Activated naive CD4-positive, alpha-beta T cell treated with anti-CD3 and anti-CD28 coated beads for 36 hours (primary cell): ENCODE measurements at regions of chr2 and their contacts with region 1.

Region 1: DNA sequence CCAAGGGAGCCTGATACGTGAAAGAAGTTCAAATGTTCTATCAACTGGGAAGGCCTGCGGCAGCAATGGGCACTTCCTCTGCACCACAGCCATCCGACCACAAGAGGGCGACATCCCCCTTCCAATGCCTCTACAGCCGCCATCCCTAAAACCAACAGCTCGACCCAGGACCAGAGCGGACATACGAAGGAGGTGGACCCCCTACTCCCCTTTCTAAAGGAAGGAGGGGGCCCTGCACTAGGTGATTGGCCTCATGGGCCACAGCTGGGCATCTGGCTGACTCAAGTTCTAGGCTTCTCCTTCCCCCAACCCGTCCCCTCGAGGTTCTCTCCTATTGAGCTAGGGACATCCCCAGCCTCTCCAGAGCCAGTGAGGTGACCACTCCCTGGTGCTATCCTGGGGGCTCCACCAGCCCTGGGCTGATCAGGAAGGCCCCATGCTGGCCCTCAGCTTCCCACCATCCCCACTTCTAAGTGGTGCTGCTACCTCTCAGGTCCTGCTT is 217.2 kb downstream of the TNS1 start:
- DNase-seq: peak; percentile 88
- H3K4me3 Mint-ChIP-seq: no peak overlapping the region
- H3K27ac Mint-ChIP-seq: peak overlapping the region; percentile 51
- H3K4me1 Mint-ChIP-seq: peaks cover 13% of the 10 kb centered on the region
- H3K27me3 Mint-ChIP-seq: peaks cover 2% of the 10 kb centered on the region

Region 2: GRCh38 chr2:216918088-216918680 is 867.4 kb before region 1 on chr2:
- CTCF ChIA-PET with region 1: no interaction called
- intact Hi-C with region 1: no loop called
- DNase-seq: no peak
- H3K4me3 Mint-ChIP-seq: no peak overlapping the region
- H3K27ac Mint-ChIP-seq: no peak overlapping the region
- H3K4me1 Mint-ChIP-seq: no peaks in the 10 kb centered on the region
- H3K27me3 Mint-ChIP-seq: peaks cover 2% of the 10 kb centered on the region

Region 3: DNA sequence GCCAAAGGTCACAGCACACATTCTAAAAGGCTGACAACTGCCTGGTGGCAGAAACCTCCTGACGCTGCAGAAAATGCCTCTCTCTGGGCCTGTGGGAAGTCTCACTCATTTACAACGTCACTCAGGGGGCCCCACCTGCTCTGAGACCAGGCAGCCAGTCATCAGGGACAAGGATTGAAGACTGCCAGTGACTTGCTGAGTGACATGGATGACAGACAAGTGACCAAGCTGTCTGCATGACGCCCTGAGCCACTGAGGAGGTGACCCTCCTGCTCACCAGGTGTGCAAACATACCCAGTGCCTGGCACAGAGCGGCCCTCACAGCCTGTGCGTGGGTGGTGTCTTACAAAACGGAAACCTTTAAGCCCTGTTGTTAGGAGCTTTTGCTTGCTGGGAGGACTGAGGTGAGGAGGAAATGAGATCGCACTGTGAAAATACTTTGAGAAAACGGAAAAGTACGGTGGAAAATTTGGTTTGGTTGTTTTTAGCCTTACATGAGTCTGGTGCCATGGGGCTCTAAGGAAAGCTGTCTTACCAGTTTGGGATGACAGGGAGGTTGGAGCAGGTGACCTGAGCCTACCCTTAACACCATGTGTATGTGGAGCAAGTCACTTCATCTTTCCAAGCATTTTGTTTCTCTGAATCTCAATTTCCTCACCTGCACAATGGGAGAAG is 175.1 kb before region 1 on chr2:
- CTCF ChIA-PET with region 1: no interaction called
- intact Hi-C with region 1: no loop called
- DNase-seq: peak; percentile 89
- H3K4me3 Mint-ChIP-seq: peak overlapping the region; percentile 25
- H3K27ac Mint-ChIP-seq: peak overlapping the region; percentile 84
- H3K4me1 Mint-ChIP-seq: peaks cover 54% of the 10 kb centered on the region
- H3K27me3 Mint-ChIP-seq: no peaks in the 10 kb centered on the region

Region 4: DNA sequence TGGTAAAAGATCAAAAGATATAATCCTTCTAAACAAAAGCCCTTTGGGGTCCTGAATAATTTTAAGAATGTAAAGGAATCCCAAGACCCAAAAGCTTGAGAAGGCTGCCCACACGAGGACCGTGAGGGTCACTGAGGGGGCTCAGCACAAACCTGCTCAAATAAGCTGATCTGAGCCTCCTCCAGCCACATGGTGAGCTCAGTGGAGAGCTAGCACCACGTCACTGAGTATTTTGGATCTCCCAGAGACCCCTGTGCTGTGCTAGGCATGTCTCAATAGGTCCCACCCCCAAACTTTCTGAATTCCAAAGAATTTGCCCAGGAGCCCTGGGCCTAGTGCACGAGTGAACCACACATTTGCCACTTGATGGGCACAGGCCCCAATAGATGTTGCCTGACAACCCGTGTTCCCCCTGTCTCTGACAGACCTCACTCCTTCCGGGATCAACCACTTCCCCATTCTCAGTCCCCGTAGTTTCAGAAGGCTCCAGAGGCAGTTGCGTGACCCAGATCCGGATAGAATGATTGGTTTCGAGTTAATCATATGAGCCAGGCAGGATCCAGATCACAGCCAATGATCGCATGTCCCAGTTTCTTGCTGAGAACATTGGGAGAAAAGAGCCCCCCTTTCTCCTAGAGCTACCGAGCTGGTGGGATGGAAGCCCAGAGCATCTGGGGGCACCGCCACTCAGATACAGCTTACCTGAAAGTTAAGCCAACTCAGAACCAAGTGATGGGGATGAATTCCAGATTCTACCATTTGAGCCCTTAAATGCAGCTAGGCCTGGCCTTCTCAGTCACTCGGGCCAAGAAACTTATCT is 13.4 kb after region 1 on chr2:
- CTCF ChIA-PET with region 1: interaction called, 45 read pairs
- intact Hi-C with region 1: no loop called
- DNase-seq: no peak
- H3K4me3 Mint-ChIP-seq: no peak overlapping the region
- H3K27ac Mint-ChIP-seq: no peak overlapping the region
- H3K4me1 Mint-ChIP-seq: no peaks in the 10 kb centered on the region
- H3K27me3 Mint-ChIP-seq: no peaks in the 10 kb centered on the region

Region 5: DNA sequence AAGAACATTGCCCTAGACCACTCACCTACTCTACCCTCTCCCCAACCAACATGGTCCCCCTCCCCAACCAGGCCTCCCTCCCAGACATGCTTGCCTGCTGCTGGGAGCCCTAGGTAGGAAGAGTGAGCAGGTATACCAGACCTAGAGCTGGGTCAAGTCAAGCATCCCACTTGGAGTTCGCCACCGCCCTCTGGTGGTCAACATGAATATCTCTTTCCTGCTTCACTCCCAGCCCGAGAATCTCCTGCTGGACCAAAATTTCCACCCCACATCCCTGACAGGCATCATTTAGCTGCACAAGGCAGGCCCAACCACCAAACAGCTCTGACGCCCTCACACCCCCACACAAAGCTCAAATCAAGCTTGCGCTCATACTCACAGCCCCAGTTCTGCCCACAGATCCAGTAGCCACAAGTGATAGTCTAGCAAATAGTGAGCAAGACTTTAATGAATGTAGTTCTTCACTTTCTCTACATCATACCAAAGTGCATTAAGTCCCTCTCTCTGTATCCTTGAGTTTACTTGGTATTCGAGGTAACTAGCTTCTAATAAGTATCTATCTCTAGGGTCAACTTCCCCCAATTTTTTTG is 101.2 kb after region 1 on chr2:
- CTCF ChIA-PET with region 1: interaction called, 231 read pairs
- intact Hi-C with region 1: loop called (anchors 1 kb)
- DNase-seq: peak; percentile 84
- H3K4me3 Mint-ChIP-seq: no peak overlapping the region
- H3K27ac Mint-ChIP-seq: no peak overlapping the region
- H3K4me1 Mint-ChIP-seq: no peaks in the 10 kb centered on the region
- H3K27me3 Mint-ChIP-seq: no peaks in the 10 kb centered on the region

Region 6: DNA sequence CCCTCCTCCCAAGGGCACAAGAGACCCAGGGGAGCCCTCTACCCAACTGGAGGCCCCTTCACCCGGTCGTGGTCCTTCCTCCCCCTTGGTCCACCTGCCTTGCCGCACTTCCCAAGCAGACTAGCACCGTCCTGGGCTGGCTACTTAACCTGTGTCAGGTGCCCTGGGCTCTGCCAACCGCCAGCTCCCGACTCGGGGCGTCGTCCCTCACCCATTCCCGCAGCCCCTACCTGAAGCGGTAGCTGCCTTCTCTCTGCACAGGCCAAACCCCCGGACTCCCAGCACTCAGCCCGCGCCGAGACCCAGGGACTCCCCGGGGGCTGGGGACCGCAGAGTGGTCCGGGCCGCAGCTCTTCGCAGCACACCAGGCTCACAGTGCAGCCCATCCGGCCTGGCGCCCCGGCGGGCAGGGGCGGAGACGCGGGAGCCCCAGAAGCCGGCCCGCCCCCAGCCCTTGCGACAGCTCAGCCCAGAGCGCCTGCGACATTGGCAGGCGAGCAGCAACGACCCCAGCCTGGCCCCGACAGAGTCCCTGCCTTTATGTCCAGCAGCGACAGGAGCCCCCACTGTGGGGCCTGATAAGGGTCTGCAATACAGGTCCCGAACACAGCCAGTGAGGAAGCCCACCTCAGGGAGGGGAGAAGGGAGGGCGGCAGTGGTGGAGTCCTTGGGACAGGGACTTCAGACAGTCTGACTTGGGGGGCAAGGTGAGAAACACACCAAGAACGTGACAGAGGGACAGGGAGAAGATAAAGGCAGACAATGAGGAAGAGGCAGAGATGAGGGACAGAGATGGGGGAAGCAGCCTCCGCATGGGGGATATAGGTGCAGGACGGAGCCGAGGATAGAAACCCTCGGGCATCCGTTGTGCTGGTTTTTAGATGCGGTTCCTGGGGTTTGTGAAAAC is 248.2 kb after region 1 on chr2:
- CTCF ChIA-PET with region 1: interaction called, 15 read pairs
- intact Hi-C with region 1: loop called (anchors 1 kb)
- DNase-seq: no peak
- H3K4me3 Mint-ChIP-seq: peak overlapping the region; percentile 58
- H3K27ac Mint-ChIP-seq: no peak overlapping the region
- H3K4me1 Mint-ChIP-seq: peaks cover 3% of the 10 kb centered on the region
- H3K27me3 Mint-ChIP-seq: no peaks in the 10 kb centered on the region

Region 7: DNA sequence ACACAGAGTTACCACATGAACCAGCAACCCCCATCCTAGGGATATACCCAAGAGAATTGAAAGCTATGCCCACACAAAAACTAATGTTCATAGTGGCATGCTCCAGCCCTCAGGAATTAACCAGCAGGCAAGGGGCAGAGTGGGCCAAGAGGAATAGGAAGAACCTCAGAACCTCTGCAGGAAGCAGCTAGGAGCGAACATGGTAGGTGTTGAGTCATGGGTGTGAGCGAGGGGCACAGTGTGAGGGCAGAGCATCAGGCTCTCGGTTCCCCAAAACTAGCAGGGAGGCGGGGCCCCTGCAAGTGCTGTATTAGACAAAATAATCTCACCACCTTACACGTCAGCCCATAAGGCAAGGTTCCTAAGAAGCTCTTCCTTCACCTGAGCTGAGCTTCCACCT is 277.9 kb after region 1 on chr2:
- CTCF ChIA-PET with region 1: interaction called, 14 read pairs
- intact Hi-C with region 1: loop called (anchors 1 kb)
- DNase-seq: no peak
- H3K4me3 Mint-ChIP-seq: no peak overlapping the region
- H3K27ac Mint-ChIP-seq: no peak overlapping the region
- H3K4me1 Mint-ChIP-seq: no peaks in the 10 kb centered on the region
- H3K27me3 Mint-ChIP-seq: peaks cover 4% of the 10 kb centered on the region